ENCODE measurements at regions of chr3 and their contacts with region 1.

Region 1: DNA sequence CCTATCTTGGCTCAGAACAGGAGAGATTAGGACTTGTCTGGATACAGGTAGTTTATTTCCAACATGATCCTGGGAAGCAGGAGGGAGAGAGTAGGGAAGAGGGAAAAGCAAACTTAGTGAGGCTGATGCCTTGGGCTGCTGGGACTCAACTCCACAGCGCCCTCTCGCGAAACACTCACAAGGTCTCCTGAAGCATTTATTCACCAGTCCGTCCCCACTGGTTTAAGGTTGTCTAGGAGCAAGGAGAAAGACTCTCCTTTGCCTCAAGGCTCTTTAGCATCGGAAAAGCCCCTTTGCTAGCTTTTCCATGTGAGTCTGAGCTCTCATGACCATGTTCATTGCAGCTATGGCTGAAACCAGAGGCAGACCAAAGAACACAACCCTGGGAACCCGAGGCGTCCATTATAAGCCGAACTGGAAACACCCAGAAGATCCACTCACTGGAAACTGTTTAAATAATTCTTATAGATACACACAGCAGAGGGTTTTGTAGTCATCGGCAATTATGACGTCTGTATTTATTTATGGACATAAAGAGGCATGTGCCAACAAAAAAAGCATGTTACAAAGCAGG is 244.5 kb downstream of the CD47 start:
- DNase-seq: peak in 5 of 9 donors; percentile 2 to 20 (median 6)
- ATAC-seq: no peak
- H3K4me3 ChIP-seq: no peak overlapping the region
- H3K4me3 Mint-ChIP-seq: no peak overlapping the region
- H3K27ac ChIP-seq: no peak overlapping the region
- H3K27ac Mint-ChIP-seq: no peak overlapping the region
- H3K4me1 ChIP-seq: no peaks in the 10 kb centered on the region
- H3K4me1 Mint-ChIP-seq: no peaks in the 10 kb centered on the region
- H3K27me3 ChIP-seq: no peaks in the 10 kb centered on the region
- H3K27me3 Mint-ChIP-seq: peaks cover 0 to 13% (median 0%) of the 10 kb centered on the region in 5 donors

Region 2: GRCh38 chr3:106643684-106644161 is 1202.6 kb before region 1 on chr3:
- CTCF ChIA-PET with region 1: no interaction called
- POLR2A ChIA-PET with region 1: no interaction called
- intact Hi-C with region 1: no loop called
- DNase-seq: no peak
- ATAC-seq: no peak
- H3K4me3 ChIP-seq: no peak overlapping the region
- H3K4me3 Mint-ChIP-seq: no peak overlapping the region
- H3K27ac ChIP-seq: no peak overlapping the region
- H3K27ac Mint-ChIP-seq: no peak overlapping the region
- H3K4me1 ChIP-seq: no peaks in the 10 kb centered on the region
- H3K4me1 Mint-ChIP-seq: no peaks in the 10 kb centered on the region
- H3K27me3 ChIP-seq: no peaks in the 10 kb centered on the region
- H3K27me3 Mint-ChIP-seq: peaks cover 0 to 12% (median 8%) of the 10 kb centered on the region in 5 donors

Region 3: DNA sequence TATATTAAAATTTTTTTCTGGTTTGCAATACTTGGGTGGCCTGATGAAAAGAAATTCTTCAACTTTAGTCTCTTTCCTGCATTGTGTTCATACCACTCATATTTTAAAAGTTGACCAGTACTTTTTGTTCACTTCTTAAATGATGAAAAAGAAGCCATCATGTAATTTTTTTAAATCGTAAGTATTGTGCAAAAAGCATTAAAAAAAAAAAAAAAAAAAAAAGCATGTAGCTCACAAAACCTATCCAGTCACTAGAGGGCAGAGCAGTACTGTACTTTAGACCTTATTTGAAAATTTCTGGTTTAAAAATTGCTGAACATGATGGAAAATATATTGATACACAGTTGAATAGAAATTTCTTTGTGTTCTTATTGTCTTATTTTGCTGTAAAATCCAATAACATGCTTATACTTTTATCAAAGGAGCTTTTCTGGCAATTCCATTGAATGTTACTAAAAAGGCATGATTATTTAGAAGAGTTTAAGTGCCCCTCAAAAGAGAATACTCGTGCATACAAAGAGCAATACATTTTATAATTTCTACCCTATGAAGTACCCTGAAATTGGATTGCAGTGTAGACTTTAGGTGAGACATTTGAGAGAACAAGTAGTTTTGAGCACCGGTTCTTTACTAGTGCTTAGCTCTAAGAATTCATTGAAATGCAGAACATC is 185.9 kb before region 1 on chr3:
- CTCF ChIA-PET with region 1: no interaction called
- POLR2A ChIA-PET with region 1: no interaction called
- intact Hi-C with region 1: loop called in 1 of 2 experiments (anchors 5 kb)
- DNase-seq: peak in 6 of 9 donors; percentile 11 to 43 (median 34)
- ATAC-seq: peak; percentile 67
- H3K4me3 ChIP-seq: no peak overlapping the region
- H3K4me3 Mint-ChIP-seq: no peak overlapping the region
- H3K27ac ChIP-seq: no peak overlapping the region
- H3K27ac Mint-ChIP-seq: no peak overlapping the region
- H3K4me1 ChIP-seq: peaks cover 0 to 13% of the 10 kb centered on the region in 2 donors
- H3K4me1 Mint-ChIP-seq: peaks cover 15 to 45% (median 31%) of the 10 kb centered on the region in 7 donors
- H3K27me3 ChIP-seq: no peaks in the 10 kb centered on the region
- H3K27me3 Mint-ChIP-seq: no peaks in the 10 kb centered on the region